HepG2 (cell line): ENCODE measurements at regions of chr15 and their contacts with region 1.

Region 1: DNA sequence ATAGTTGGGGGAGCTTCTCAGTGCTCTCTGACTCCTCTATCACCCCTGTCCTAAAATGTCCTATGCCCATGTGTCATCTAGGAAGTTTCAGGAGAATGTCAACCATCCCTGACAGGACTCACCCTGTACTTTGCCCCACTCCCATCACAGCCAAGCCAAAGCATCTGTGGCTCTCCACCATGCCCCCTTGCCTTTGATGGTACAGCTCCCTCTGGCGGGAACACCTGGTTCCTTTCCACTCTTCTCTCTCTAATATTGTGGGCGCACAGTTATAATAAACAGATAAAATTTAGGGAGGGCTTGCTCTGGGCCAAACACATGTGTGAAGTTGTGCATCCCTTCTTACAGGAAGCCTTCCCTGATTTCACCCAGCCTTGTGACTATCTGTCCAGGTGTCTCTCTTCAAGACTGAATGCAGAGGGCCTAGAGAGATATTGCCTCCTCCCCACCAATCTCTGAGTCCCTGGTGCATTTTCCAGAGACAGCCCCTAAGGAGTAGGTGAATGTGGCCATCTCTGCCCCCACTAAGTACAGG is 62.8 kb downstream of the ISG20 start:
- DNase-seq: peak; percentile 39
- ATAC-seq: peak; percentile 92
- H3K4me3 ChIP-seq: no peak overlapping the region
- H3K27ac ChIP-seq: no peak overlapping the region
- H3K4me1 ChIP-seq: no peaks in the 10 kb centered on the region
- H3K27me3 ChIP-seq: peaks cover 3 to 47% of the 10 kb centered on the region in 2 experiments; a peak in 4 of 5 replicates
- CTCF ChIP-seq: peak; percentile 72
- EP300 ChIP-seq: no peak
- POLR2A ChIP-seq: no peak
- RAD21 ChIP-seq: peak; percentile 57

Region 2: DNA sequence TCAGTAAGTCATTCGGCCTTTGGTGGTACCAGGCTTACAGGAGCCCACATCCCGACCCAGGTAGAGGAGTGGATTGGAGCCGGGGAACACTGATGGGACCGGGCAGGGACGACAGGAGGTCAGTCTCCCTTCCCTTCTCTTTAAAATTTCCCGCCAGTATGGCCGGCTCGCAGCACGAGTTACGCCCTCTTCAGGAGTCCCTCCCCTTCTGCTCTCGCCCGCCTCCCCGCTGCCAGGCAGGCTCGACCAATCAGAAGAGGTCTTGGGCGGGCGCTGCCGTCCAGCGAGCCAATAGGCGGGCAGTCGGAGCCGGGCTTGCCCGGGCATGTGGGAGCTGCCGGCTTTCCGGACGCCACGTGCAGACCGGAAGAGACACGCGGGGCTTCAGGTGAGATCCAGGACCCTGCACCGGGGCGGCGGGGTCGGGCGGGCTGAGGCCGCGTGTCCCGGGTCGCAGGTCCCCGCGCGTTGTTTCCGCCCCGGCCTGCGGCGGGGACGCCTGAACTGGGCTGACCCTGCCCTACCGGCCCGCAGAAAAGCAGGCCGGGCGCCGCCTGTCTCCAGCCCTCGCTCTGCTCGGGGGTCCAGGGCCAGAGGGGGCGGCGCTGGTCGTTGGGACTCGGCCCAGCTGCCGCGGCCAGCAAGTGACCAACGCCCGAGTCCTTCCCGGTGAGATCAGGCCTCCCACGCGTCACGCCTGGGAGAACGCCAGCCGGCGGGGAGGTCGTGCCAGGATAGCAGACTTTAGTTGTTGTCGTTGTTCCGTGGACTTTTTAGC is 80.4 kb before region 1 on chr15 and contains the start of gene AEN:
- CTCF ChIA-PET with region 1: interaction called, 5 read pairs
- POLR2A ChIA-PET with region 1: no interaction called
- in situ Hi-C with region 1: no loop called
- intact Hi-C with region 1: loop called (anchors 1 kb)
- DNase-seq: peak; percentile 92
- ATAC-seq: peak; percentile 92
- H3K4me3 ChIP-seq: peak within 1 kb of the TSS; percentile 87 to 96 (median 94)
- H3K27ac ChIP-seq: peak within 1 kb of the TSS; percentile 93
- H3K4me1 ChIP-seq: peaks cover 46% of the 10 kb centered on the region
- H3K27me3 ChIP-seq: no peaks in the 10 kb centered on the region
- CTCF ChIP-seq: peak; percentile 26; the same call in 1 of the 2 replicates
- EP300 ChIP-seq: no peak
- POLR2A ChIP-seq: peak; percentile 76 to 81
- RAD21 ChIP-seq: peak; percentile 42
- total RNA-seq, gene AEN: 115 and 118 TPM in 2 replicates

Region 3: DNA sequence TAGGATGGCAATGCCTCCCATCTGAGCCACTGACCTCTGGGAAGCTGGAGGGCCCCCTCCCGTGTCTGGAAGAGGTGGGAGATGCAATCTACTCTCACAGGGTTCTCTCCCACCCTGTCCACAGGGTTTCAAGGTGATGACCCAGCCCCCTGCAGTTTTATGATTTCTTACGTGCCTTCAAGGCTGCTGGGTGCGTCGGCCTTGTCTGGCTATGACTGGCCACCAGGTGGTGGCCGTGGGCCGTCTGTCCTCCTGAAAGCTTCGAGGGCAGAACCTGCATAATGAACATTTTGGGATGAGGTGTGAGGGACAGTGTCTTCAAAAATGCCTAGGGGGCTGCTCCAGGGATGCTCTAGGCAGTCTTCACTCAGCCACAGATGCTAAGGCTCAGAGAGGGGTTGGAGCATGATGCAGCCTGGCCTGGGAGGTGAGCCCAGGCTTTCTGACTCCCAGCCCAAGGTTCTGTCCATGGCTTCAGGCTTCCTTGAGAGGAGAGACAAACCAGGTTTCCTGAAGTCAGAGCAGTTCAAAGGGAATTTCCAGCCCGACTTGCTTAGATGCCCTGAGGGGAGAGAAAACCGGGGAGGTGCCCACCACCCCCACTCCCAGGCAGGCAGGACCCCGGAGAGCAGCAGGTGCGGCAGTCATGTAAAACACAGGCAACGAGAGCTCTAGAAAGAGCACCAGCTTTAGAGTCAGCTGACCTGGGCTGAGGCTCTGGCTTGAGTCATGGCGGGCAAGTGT is 44.1 kb before region 1 on chr15:
- CTCF ChIA-PET with region 1: interaction called, 10 read pairs
- POLR2A ChIA-PET with region 1: no interaction called
- in situ Hi-C with region 1: loop called (anchors 5 kb)
- intact Hi-C with region 1: loop called (anchors 1 kb)
- DNase-seq: no peak
- ATAC-seq: peak; percentile 83
- H3K4me3 ChIP-seq: no peak overlapping the region
- H3K27ac ChIP-seq: no peak overlapping the region
- H3K4me1 ChIP-seq: no peaks in the 10 kb centered on the region
- H3K27me3 ChIP-seq: peaks cover 0 to 13% of the 10 kb centered on the region in 2 experiments; a peak in 4 of 5 replicates
- CTCF ChIP-seq: peak; percentile 87
- EP300 ChIP-seq: no peak
- POLR2A ChIP-seq: no peak
- RAD21 ChIP-seq: peak; percentile 80

Region 4: GRCh38 chr15:88690331-88690730 is 11.3 kb before region 1 on chr15:
- CTCF ChIA-PET with region 1: no interaction called
- POLR2A ChIA-PET with region 1: no interaction called
- in situ Hi-C with region 1: no loop called
- intact Hi-C with region 1: no loop called
- DNase-seq: no peak
- ATAC-seq: peak; percentile 65
- H3K4me3 ChIP-seq: no peak overlapping the region
- H3K27ac ChIP-seq: no peak overlapping the region
- H3K4me1 ChIP-seq: no peaks in the 10 kb centered on the region
- H3K27me3 ChIP-seq: peaks cover 0 to 13% of the 10 kb centered on the region in 2 experiments; a peak in 3 of 5 replicates
- CTCF ChIP-seq: no peak
- EP300 ChIP-seq: no peak
- POLR2A ChIP-seq: no peak
- RAD21 ChIP-seq: no peak